ENCODE measurements at regions of chr2 and their contacts with region 1.

Region 1: GRCh38 chr2:39913648-39914461 is 134.8 kb upstream of the THUMPD2 start:
- DNase-seq: peak; percentile 85
- H3K4me3 ChIP-seq: no peak overlapping the region
- H3K27ac ChIP-seq: peak overlapping the region; percentile 14
- H3K4me1 ChIP-seq: peaks cover 53% of the 10 kb centered on the region
- CTCF ChIP-seq: peak; percentile 99

Region 2: DNA sequence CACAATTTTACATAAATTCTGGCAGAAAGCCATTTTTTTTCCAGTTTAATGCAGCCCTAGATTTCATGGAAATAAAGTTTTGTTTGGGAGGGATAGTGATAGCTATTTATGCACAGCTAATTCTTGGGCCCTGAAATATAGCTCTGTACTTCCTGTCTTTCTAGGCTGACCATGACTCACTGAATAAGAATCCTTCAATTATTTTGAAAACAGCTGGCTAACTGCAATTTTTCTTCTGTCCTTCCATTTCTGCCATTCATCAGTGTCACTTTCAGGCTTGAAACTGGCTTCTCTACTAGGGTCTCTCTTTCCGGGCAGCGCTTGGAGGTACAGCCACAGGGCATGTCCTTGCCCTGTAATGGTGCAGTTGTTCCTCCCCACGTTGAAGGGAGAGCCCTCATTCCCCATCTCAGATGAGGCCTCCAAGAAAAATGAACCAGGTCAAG is 345.3 kb before region 1 on chr2:
- CTCF ChIA-PET with region 1: no interaction called
- POLR2A ChIA-PET with region 1: no interaction called
- intact Hi-C with region 1: no loop called
- DNase-seq: no peak
- H3K4me3 ChIP-seq: no peak overlapping the region
- H3K27ac ChIP-seq: no peak overlapping the region
- H3K4me1 ChIP-seq: no peaks in the 10 kb centered on the region
- CTCF ChIP-seq: no peak

Region 3: GRCh38 chr2:39837856-39838453 is 75.9 kb before region 1 on chr2:
- CTCF ChIA-PET with region 1: no interaction called
- POLR2A ChIA-PET with region 1: no interaction called
- intact Hi-C with region 1: loop called (anchors 5 kb)
- DNase-seq: peak; percentile 78
- H3K4me3 ChIP-seq: no peak overlapping the region
- H3K27ac ChIP-seq: no peak overlapping the region
- H3K4me1 ChIP-seq: peaks cover 17% of the 10 kb centered on the region
- CTCF ChIP-seq: peak; percentile 99

Region 4: DNA sequence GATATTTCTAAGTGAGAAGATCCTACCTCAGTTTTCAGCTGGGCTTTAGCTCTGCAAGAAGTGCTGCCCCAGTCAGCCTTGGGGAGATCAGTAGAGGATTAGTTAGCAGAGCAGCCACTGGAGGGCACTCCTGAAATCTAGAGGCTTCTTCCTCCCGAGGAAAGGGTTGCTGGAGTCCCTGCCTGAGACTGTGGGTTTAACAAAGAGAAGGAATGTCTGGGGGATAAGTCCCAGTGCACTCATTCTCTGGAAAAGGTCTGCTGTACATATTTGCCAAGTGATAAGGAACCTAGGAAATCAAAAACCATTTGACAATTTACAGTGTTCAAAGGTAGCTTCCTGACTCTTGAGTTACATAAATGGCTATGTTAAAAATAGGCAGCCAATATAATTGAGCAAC is 330.8 kb after region 1 on chr2:
- CTCF ChIA-PET with region 1: no interaction called
- POLR2A ChIA-PET with region 1: no interaction called
- intact Hi-C with region 1: loop called (anchors 1 kb)
- DNase-seq: peak; percentile 75
- H3K4me3 ChIP-seq: no peak overlapping the region
- H3K27ac ChIP-seq: no peak overlapping the region
- H3K4me1 ChIP-seq: peaks cover 30% of the 10 kb centered on the region
- CTCF ChIP-seq: peak; percentile 88

Region 5: GRCh38 chr2:40448468-40449079 is 534.7 kb after region 1 on chr2:
- CTCF ChIA-PET with region 1: no interaction called
- POLR2A ChIA-PET with region 1: no interaction called
- intact Hi-C with region 1: loop called (anchors 5 kb)
- DNase-seq: peak; percentile 68
- H3K4me3 ChIP-seq: no peak overlapping the region
- H3K27ac ChIP-seq: no peak overlapping the region
- H3K4me1 ChIP-seq: peaks cover 45% of the 10 kb centered on the region
- CTCF ChIP-seq: peak; percentile 88

Region 6: DNA sequence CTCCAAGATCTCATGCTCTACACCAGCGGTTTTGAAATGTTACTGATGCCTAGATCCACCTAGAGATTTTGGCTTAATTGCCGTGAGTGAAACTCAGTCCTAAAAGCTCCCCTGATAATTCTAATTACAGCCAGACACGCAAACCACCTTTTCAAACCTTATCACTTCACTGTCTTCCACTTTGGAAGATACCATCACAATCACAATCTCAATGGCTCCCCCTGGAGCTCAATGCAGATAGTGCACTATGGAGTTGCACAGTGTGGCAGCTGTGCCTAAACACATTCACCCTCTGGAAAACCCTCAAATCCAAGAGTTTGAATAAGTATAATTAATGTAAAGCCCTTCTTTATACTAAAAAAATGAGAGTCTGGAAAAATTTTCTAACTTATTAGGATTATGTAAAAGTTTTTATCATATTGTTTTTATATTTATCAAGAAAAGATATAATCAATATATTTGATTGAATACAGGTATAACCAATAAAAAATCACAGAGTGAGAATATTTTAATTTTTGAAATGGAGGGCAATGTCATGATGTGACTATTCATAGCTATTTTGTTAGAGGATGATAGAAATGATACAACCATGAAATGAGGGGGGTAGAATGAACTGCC is 640.9 kb after region 1 on chr2:
- CTCF ChIA-PET with region 1: interaction called, 11 read pairs
- POLR2A ChIA-PET with region 1: interaction called, 4 read pairs
- intact Hi-C with region 1: loop called (anchors 1 kb)
- DNase-seq: peak; percentile 72
- H3K4me3 ChIP-seq: no peak overlapping the region
- H3K27ac ChIP-seq: no peak overlapping the region
- H3K4me1 ChIP-seq: no peaks in the 10 kb centered on the region
- CTCF ChIP-seq: peak; percentile 98

Region 7: DNA sequence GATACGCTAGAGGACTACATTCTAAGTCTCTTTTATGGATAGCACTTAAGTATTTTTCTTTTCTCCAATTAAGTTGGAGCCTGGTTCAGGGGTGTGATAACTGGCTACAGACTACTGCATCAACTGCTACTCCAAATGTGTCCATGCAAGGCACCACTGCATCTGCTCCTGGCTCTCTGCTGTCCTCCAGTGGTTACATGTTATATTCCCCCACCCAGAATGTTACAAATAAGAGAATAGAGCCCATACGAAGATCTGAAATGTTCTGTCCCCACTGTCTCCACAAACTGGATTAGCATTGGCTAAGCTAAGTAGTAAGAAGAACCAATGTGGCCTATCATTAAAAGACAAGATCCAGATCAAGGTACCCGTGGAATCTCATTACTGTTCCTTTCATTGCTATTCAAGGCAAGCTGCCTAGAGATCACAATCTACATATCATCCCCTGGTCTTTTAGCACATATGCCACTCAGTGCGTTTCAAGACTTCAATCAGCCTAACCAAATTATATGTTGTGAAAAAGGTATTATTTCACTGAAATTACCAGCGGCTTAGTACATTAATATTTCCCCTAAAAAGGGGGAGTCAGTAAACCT is 846.3 kb after region 1 on chr2:
- CTCF ChIA-PET with region 1: no interaction called
- POLR2A ChIA-PET with region 1: no interaction called
- intact Hi-C with region 1: loop called (anchors 1 kb)
- DNase-seq: peak; percentile 45
- H3K4me3 ChIP-seq: no peak overlapping the region
- H3K27ac ChIP-seq: no peak overlapping the region
- H3K4me1 ChIP-seq: no peaks in the 10 kb centered on the region
- CTCF ChIP-seq: peak; percentile 84

Region 8: DNA sequence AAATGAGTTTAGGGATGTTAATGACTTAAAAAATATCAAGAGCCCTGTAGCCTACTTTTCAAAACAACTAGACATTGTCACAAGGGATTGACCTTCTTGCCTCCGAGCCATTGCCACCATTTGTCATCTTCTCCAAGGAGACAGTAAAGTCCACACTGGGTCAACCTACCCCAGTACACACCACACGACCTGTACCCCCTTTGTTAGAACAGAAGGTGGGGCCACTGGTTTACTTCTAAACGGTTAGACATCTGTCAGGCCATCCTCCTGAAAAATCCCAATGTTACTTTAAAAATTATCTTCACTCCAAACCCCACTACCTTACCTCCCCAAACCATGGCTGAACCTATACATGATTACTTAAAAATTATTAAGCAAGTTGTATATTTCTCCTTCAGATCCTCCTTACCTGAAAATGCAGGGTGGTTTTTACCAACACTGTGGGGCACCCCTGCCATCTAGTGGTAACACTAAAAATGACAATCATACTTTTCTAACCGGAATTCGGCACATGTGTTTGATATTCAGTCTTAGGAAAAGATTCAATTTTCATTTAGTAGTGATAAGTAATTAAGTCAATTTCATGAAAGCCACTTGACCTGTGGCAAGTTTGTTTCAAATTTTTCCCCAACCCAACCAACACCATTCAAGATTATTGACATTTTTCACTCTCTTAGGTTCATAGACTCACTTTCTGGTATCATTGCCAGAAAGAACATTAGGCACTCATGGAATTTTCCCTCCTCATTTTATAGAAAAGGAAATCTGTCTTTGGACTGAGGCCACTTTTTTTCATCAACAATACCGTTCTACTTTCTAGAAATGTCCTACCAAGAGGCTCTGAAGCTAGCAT is 1868.7 kb after region 1 on chr2:
- CTCF ChIA-PET with region 1: no interaction called
- POLR2A ChIA-PET with region 1: no interaction called
- intact Hi-C with region 1: loop called (anchors 5 kb)
- DNase-seq: peak; percentile 39
- H3K4me3 ChIP-seq: no peak overlapping the region
- H3K27ac ChIP-seq: no peak overlapping the region
- H3K4me1 ChIP-seq: no peaks in the 10 kb centered on the region
- CTCF ChIP-seq: peak; percentile 98

Measured in OCI-LY7 (cell line).